Posterior vena cava (tissue), 2 donors: ENCODE measurements at regions of chr1 and their contacts with region 1.

Region 1: DNA sequence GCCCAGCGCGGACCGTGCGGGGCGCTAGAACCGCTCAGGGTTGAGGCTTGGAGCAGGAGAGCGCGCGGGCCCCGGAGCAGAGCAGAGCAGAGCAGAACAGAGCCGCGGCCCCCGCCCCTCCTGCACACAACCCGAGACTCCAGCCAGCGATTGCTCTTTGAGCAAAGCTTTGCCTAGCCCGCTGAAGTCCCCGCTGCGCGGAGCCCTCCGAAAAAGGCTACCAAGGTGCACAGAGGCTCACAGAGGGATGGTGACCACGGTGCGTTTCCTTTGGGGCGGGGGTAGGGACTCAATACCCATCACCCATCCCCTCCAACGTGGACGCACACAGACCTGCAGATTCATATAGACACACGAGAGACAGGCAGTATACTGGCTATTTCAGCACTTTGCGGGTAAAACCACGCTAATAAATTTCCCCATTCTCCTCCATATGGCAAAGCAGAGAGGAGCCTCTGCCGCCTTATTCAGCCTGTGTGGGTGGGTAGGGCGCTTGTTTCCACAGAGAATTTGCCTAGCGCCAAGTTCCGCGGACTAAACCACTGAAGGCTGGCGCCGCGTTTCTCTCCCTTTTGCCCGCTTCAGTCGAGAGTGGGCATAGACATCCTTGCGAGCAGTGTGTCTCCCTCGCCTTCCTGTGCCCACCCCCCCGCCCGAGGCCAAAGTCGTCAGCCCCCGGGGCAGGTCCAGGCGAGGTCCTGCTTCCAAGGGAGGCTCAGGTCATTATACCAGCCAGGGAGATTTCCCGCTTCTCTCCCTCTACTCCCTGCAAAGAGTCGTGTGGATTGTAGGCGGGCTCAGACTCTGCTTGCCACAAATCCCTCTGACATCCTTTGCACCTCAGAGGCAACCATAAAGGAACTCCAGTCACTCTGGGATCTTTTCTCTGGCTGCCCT is 8.5 kb downstream of the HLX start:
- DNase-seq: peak; percentile 88

Region 2: GRCh38 chr1:220726634-220727033 is 161.1 kb before region 1 on chr1:
- intact Hi-C with region 1: no loop called
- DNase-seq: no peak

Region 3: GRCh38 chr1:221203224-221204054 is 315.7 kb after region 1 on chr1:
- intact Hi-C with region 1: loop called in 1 of 2 experiments (anchors 5 kb)
- DNase-seq: peak; percentile 91

Region 4: DNA sequence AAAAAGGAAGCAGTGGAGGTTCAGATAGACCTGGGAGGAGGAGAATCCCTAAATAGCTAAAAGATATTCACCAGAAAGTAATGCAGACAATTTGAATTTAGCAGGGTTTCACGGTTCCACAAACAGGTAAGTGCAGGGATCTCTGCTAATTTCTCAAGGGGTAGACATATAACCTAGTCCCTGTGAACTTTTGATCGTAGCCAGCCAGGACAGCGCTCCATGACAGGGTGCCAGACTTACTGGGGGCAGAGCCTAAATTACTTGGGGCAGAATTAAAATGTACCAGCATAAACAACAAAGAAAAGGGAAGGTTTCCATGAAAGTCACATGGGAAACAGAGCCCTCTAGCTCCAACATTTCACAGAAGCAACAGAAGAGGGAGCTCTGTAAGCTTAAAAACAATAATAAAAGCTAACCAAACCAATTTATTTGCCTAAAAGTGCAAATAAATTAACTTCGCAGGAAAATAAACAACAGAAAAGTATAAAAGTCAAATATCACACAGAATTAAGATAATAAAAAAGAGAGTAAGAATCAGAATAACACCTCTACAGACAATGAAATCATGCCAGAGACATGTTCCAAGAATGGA is 655.9 kb after region 1 on chr1:
- intact Hi-C with region 1: no loop called
- DNase-seq: no peak